MCF 10A (cell line): ENCODE measurements at regions of chr2 and their contacts with region 1.

Region 1: GRCh38 chr2:105789745-105790460 is 45.2 kb downstream of the NCK2 start:
- DNase-seq: peak; percentile 70
- H3K4me3 Mint-ChIP-seq: no peak overlapping the region
- H3K27ac Mint-ChIP-seq: no peak overlapping the region
- H3K4me1 Mint-ChIP-seq: peaks cover 7% of the 10 kb centered on the region
- H3K27me3 Mint-ChIP-seq: no peaks in the 10 kb centered on the region
- CTCF ChIP-seq: no peak

Region 2: DNA sequence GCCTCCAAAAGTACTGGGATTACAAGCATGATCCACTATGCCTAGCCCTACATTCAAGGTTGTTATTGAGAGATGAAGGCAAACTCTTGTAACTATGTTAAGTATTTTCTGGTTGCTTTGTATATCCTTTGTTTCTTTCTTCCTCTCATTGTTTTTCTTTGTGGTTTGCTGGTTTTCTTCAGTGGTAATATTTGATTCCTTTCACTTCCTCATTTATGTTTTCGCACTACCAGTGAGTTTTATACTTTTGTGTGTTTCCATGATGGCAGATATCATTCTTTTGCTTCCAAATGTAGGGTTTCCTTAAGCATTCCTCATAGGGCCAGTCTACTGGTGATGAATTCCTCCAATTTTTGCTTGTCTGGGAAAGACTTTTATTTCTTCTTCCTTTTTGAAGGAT is 45.0 kb after region 1 on chr2:
- CTCF ChIA-PET with region 1: no interaction called
- POLR2A ChIA-PET with region 1: no interaction called
- intact Hi-C with region 1: no loop called
- DNase-seq: no peak
- H3K4me3 Mint-ChIP-seq: no peak overlapping the region
- H3K27ac Mint-ChIP-seq: no peak overlapping the region
- H3K4me1 Mint-ChIP-seq: no peaks in the 10 kb centered on the region
- H3K27me3 Mint-ChIP-seq: no peaks in the 10 kb centered on the region
- CTCF ChIP-seq: no peak

Region 3: GRCh38 chr2:105858868-105859693 is 69.2 kb after region 1 on chr2:
- CTCF ChIA-PET with region 1: no interaction called
- POLR2A ChIA-PET with region 1: no interaction called
- intact Hi-C with region 1: loop called (anchors 10 kb)
- DNase-seq: no peak
- H3K4me3 Mint-ChIP-seq: no peak overlapping the region
- H3K27ac Mint-ChIP-seq: no peak overlapping the region
- H3K4me1 Mint-ChIP-seq: peaks cover 16% of the 10 kb centered on the region
- H3K27me3 Mint-ChIP-seq: no peaks in the 10 kb centered on the region
- CTCF ChIP-seq: no peak

Region 4: GRCh38 chr2:105873721-105874120 is 83.8 kb after region 1 on chr2:
- CTCF ChIA-PET with region 1: no interaction called
- POLR2A ChIA-PET with region 1: no interaction called
- intact Hi-C with region 1: no loop called
- DNase-seq: peak; percentile 80
- H3K4me3 Mint-ChIP-seq: no peak overlapping the region
- H3K27ac Mint-ChIP-seq: peak overlapping the region; percentile 35
- H3K4me1 Mint-ChIP-seq: peaks cover 11% of the 10 kb centered on the region
- H3K27me3 Mint-ChIP-seq: no peaks in the 10 kb centered on the region
- CTCF ChIP-seq: no peak